ENCODE measurements at regions of chr17 and their contacts with region 1.

Region 1: GRCh38 chr17:35242805-35243560 is at the start of gene SLFN5:
- DNase-seq: peak; percentile 91
- H3K4me3 ChIP-seq: peak within 1 kb of the TSS; percentile 68 to 78 (median 71)
- H3K27ac ChIP-seq: peak within 1 kb of the TSS; percentile 100
- H3K4me1 ChIP-seq: peaks cover 32% of the 10 kb centered on the region
- H3K27me3 ChIP-seq: no peaks in the 10 kb centered on the region
- CTCF ChIP-seq: no peak
- total RNA-seq, gene SLFN5: 131 to 154 TPM

Region 2: GRCh38 chr17:35088881-35089585 is 153.9 kb before region 1 on chr17:
- CTCF ChIA-PET with region 1: no interaction called
- dilution Hi-C with region 1: no loop called
- in situ Hi-C with region 1: no loop called
- intact Hi-C with region 1: loop called (anchors 10 kb)
- DNase-seq: peak; percentile 82
- H3K4me3 ChIP-seq: peak overlapping the region; percentile 57 to 80 (median 59)
- H3K27ac ChIP-seq: peak overlapping the region; percentile 84
- H3K4me1 ChIP-seq: peaks cover 44% of the 10 kb centered on the region
- H3K27me3 ChIP-seq: no peaks in the 10 kb centered on the region
- CTCF ChIP-seq: peak; percentile 49 to 66

Region 3: GRCh38 chr17:35170968-35171771 is 71.8 kb before region 1 on chr17:
- CTCF ChIA-PET with region 1: no interaction called
- dilution Hi-C with region 1: no loop called
- in situ Hi-C with region 1: no loop called
- intact Hi-C with region 1: loop called (anchors 1 kb)
- DNase-seq: peak; percentile 17
- H3K4me3 ChIP-seq: no peak overlapping the region
- H3K27ac ChIP-seq: no peak overlapping the region
- H3K4me1 ChIP-seq: peaks cover 7% of the 10 kb centered on the region
- H3K27me3 ChIP-seq: no peaks in the 10 kb centered on the region
- CTCF ChIP-seq: peak; percentile 20 to 36

Region 4: GRCh38 chr17:35189291-35189690 is 53.7 kb before region 1 on chr17:
- CTCF ChIA-PET with region 1: no interaction called
- dilution Hi-C with region 1: loop called (anchors 5 kb)
- in situ Hi-C with region 1: loop called in 1 of 2 experiments (anchors 10 kb)
- intact Hi-C with region 1: loop called (anchors 5 kb)
- DNase-seq: peak; percentile 52
- H3K4me3 ChIP-seq: no peak overlapping the region
- H3K27ac ChIP-seq: no peak overlapping the region
- H3K4me1 ChIP-seq: peaks cover 19% of the 10 kb centered on the region
- H3K27me3 ChIP-seq: no peaks in the 10 kb centered on the region
- CTCF ChIP-seq: no peak

Region 5: GRCh38 chr17:35212668-35213067 is 30.3 kb before region 1 on chr17:
- CTCF ChIA-PET with region 1: no interaction called
- dilution Hi-C with region 1: no loop called
- in situ Hi-C with region 1: no loop called
- intact Hi-C with region 1: no loop called
- DNase-seq: no peak
- H3K4me3 ChIP-seq: no peak overlapping the region
- H3K27ac ChIP-seq: no peak overlapping the region
- H3K4me1 ChIP-seq: no peaks in the 10 kb centered on the region
- H3K27me3 ChIP-seq: no peaks in the 10 kb centered on the region
- CTCF ChIP-seq: no peak

Region 6: GRCh38 chr17:35387496-35387895 is 144.5 kb after region 1 on chr17:
- CTCF ChIA-PET with region 1: no interaction called
- dilution Hi-C with region 1: no loop called
- in situ Hi-C with region 1: no loop called
- intact Hi-C with region 1: no loop called
- DNase-seq: no peak
- H3K4me3 ChIP-seq: no peak overlapping the region
- H3K27ac ChIP-seq: no peak overlapping the region
- H3K4me1 ChIP-seq: no peaks in the 10 kb centered on the region
- H3K27me3 ChIP-seq: peaks cover 9% of the 10 kb centered on the region
- CTCF ChIP-seq: no peak

Region 7: GRCh38 chr17:35432176-35433074 is 189.4 kb after region 1 on chr17 and contains the start of gene SLFN12:
- CTCF ChIA-PET with region 1: no interaction called
- dilution Hi-C with region 1: no loop called
- in situ Hi-C with region 1: no loop called
- intact Hi-C with region 1: loop called (anchors 2 kb)
- DNase-seq: peak; percentile 50
- H3K4me3 ChIP-seq: peak within 1 kb of the TSS; percentile 48 to 81 (median 55)
- H3K27ac ChIP-seq: peak within 1 kb of the TSS; percentile 52
- H3K4me1 ChIP-seq: peaks cover 18% of the 10 kb centered on the region
- H3K27me3 ChIP-seq: no peaks in the 10 kb centered on the region
- CTCF ChIP-seq: no peak
- total RNA-seq, gene SLFN12: 10.8 to 22.2 TPM

Region 8: DNA sequence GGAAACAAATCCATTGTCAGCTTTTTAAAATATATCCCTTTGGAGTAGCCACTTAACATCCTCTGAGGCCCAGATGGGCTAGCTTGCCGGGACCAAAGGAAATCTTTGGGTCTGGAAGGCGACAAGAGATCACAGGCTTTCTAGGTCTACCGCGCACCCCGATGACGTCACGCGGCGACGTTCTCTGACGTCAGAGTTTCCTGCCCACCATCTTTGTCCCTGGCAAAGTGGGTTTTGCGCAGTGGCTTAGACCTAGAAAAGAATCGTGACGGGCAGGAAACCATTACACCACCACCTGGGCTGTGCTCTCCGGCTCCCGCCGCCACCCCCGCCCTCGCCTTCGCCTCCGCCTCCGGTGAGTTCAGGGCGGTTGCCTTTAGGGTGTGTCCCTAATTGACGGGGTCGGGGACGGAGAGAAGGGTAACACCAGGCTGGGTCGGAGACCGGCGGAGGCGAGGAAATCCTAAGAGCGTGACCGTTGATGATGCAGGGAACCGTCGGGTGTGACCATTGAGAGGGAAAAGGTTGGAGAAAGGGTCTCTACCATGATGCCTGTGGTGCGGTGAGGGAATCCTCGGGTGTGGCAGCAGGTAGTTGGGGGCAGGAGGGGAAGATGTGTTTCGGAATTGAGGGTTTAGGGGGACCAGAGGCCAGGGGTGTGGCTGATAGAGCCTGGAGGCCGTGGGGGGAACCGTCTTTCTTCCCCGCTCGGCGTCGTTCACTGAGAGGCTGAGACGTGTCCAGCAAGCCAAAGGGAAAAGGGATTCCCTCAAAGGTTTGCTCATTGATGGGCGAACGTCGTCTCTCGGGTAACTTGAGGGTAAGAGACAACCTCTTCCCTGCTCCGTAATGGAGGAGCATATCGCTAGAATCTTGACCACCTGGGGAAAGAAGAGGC is 344.3 kb after region 1 on chr17 and contains the start of gene AP2B1:
- CTCF ChIA-PET with region 1: no interaction called
- dilution Hi-C with region 1: no loop called
- in situ Hi-C with region 1: no loop called
- intact Hi-C with region 1: loop called (anchors 5 kb)
- DNase-seq: peak; percentile 96
- H3K4me3 ChIP-seq: peak within 1 kb of the TSS; percentile 38 to 89 (median 84)
- H3K27ac ChIP-seq: peak within 1 kb of the TSS; percentile 89
- H3K4me1 ChIP-seq: peaks cover 7% of the 10 kb centered on the region
- H3K27me3 ChIP-seq: no peaks in the 10 kb centered on the region
- CTCF ChIP-seq: no peak
- total RNA-seq, gene AP2B1: 168 to 227 TPM

Measured in mammary epithelial cell (primary cell).